Natural killer cell (primary cell): ENCODE measurements at regions of chr7 and their contacts with region 1.

Region 1: GRCh38 chr7:38274486-38274885 is 1.1 kb upstream of the TARP start:
- DNase-seq: peak in 1 of 2 donors; percentile 38
- ATAC-seq: peak; percentile 75 to 82 (median 81)
- H3K4me3 ChIP-seq: peak overlapping the region; percentile 76
- H3K4me3 Mint-ChIP-seq: peak overlapping the region; percentile 98
- H3K27ac ChIP-seq: peak overlapping the region; percentile 100
- H3K27ac Mint-ChIP-seq: peak overlapping the region; percentile 96 to 100
- H3K4me1 ChIP-seq: peaks cover 21% of the 10 kb centered on the region
- H3K4me1 Mint-ChIP-seq: peaks cover 49 to 78% of the 10 kb centered on the region in 2 donors
- H3K27me3 ChIP-seq: no peaks in the 10 kb centered on the region
- H3K27me3 Mint-ChIP-seq: no peaks in the 10 kb centered on the region
- CTCF ChIP-seq: no peak

Region 2: DNA sequence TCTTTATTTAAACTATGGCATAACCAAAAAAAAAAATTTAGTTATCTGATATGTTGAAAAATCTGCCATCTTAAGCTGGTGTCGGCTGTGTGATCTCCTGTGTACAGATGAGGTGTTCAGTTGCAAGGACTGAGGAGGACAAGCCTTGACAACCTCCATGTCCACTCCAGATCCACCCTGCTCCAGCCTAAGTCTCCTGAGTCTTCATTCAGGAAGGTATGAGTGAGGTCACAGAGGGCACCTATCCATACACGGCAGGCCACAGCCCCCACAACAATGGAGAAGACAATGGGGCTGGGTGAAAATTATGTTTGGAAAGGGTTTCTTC is 17.2 kb before region 1 on chr7:
- intact Hi-C with region 1: loop called (anchors 1 kb)
- DNase-seq: no peak
- ATAC-seq: no peak
- H3K4me3 ChIP-seq: no peak overlapping the region
- H3K4me3 Mint-ChIP-seq: peak overlapping the region; percentile 42
- H3K27ac ChIP-seq: peak overlapping the region; percentile 71
- H3K27ac Mint-ChIP-seq: peak overlapping the region; percentile 89 to 100
- H3K4me1 ChIP-seq: peaks cover 36% of the 10 kb centered on the region
- H3K4me1 Mint-ChIP-seq: peaks cover 70 to 84% of the 10 kb centered on the region in 2 donors
- H3K27me3 ChIP-seq: no peaks in the 10 kb centered on the region
- H3K27me3 Mint-ChIP-seq: no peaks in the 10 kb centered on the region
- CTCF ChIP-seq: no peak

Region 3: DNA sequence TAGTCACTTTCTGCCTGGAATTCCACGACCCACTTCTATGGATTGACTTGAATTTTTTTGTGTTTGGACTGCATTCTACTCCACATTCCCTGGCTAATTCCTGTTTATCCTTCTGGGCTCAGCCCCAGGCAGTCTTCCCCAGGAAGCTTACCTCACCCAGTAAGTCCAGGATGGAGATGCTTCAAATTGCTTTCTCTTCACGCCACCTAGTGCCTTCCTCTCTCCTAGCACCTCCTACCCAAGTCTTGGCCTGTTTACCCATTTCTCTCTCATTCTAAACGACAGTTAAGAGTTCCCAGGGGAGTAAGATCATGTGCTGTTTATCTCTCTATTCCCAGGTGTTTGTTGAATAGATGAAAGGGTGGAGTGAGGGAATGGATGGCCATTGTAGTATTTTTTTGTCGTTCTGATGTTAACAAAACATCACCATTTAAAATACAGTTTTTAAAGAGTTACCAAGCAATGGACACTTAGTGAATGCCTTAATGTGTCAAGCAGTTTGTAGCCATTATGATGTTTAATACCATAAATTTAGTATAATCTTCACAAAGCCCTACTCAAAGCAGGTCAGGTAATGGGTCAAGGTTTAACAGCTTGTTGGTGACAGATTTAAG is 44.4 kb after region 1 on chr7:
- intact Hi-C with region 1: loop called (anchors 2 kb)
- DNase-seq: peak in 1 of 2 donors; percentile 66
- ATAC-seq: peak; percentile 26 to 56 (median 36)
- H3K4me3 ChIP-seq: peak overlapping the region; percentile 69
- H3K4me3 Mint-ChIP-seq: peak overlapping the region; percentile 97
- H3K27ac ChIP-seq: peak overlapping the region; percentile 97
- H3K27ac Mint-ChIP-seq: peak overlapping the region; percentile 95 to 99
- H3K4me1 ChIP-seq: peaks cover 65% of the 10 kb centered on the region
- H3K4me1 Mint-ChIP-seq: peaks cover 90 to 91% of the 10 kb centered on the region in 2 donors
- H3K27me3 ChIP-seq: no peaks in the 10 kb centered on the region
- H3K27me3 Mint-ChIP-seq: no peaks in the 10 kb centered on the region
- CTCF ChIP-seq: peak; percentile 77